ENCODE measurements at regions of chr4 and their contacts with region 1.

Region 1: GRCh38 chr4:78864405-78865024 is 74.7 kb downstream of the PAQR3 start:
- DNase-seq: no peak
- ATAC-seq: peak; percentile 70

Region 2: DNA sequence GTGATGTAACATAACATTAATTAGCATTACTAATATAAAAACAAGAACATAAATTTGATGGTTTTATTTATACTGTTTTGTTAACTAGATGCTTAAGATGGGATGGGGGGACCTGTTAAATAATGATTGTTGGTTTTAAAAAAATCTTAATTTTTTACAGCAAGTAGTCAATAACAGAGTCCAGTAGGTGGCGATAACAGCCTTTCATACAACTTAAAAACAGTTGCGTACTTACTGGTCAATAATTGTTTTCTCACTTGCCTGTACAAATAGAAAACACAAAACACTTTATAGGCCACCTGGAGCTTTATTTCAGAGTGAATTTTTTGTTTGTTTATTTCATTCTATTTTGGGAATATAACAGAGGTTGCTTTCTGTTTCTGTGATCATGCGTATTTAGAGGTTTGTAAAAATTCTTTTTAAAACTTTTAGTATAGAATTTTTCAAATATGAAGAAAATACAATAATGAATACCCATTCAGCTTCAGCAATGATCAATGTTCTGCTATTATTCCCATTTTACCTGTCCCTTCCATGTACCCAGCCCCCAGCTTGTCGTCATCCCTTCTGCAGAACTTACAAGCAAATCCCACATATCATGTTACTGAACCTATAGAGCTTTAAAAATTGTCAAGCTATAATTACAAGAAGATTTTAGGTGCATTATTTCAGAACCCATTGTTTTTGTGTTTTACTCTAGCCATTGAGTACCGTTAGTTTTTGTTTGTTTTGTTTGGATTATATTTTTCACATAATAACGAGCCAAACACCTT is 904.8 kb before region 1 on chr4:
- intact Hi-C with region 1: loop called (anchors 10 kb)
- DNase-seq: no peak
- ATAC-seq: no peak

Region 3: GRCh38 chr4:78584863-78585547 is 279.5 kb before region 1 on chr4:
- intact Hi-C with region 1: no loop called
- DNase-seq: no peak
- ATAC-seq: no peak

Region 4: DNA sequence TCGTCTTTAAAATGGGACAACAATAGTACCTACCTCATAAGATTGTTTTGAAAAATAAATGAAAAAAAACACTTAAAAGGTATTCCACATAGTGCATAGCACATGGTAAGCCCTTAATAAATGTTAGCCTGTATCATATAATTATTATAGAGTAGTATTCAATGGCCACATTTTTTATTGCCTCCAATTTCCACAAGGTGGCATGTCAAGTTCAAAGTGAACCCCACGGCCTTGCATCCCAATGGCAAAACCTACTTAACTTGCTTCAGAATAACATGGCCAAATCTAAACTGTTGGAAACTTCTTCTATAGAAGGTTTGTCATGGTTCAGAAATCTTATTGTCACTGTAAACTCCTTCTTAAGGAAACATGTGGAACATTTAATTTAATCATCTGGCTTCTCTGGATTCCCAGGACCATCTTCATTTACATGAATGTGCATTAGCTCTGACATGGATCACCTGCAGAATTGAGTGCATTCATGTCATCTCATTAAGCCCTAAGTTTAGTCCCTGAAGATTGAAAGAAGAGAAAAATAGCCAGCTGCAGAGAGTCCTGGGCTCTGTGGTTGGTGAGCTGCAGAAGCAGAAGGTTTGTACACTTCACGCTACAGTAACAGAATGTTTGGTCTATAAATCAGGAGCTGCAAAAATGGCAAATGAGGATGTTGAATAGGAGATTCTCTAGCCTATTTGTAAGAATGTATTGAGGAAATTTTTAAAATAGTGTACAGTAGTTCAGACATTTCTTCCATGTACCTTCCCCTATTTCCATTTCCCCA is 251.9 kb before region 1 on chr4:
- intact Hi-C with region 1: loop called (anchors 2 kb)
- DNase-seq: no peak
- ATAC-seq: peak; percentile 82

Region 5: DNA sequence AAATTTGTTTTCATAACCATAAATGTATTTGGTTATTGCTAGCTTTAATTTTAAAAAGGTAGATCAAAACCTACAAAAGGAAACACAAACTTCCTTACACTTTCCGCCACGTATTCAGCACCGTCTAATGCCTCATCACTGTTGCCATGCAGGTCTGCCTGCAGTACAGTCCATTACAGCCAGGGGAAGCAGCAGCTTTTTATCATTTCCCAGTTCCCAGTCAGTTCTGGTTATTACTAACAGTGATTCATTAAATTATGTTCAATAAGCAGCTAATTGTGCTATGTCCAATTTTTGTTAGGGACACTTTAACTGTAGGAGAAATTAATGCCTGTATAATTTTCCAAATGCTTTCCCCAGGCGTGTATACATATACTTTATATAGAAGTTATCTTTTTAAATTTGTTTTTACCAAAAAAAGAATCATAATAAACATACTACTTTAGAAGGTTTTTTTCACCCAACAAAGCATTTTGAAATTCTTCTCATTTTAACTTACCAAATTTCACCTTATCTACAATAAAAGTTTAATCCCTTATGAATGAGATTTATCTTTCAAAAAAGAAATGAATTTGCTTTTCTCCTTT is 219.7 kb before region 1 on chr4:
- intact Hi-C with region 1: loop called (anchors 10 kb)
- DNase-seq: peak; percentile 35
- ATAC-seq: peak; percentile 91